Dorsolateral prefrontal cortex (tissue), 120 donors: ENCODE measurements at regions of chr10 and their contacts with region 1.

Region 1: DNA sequence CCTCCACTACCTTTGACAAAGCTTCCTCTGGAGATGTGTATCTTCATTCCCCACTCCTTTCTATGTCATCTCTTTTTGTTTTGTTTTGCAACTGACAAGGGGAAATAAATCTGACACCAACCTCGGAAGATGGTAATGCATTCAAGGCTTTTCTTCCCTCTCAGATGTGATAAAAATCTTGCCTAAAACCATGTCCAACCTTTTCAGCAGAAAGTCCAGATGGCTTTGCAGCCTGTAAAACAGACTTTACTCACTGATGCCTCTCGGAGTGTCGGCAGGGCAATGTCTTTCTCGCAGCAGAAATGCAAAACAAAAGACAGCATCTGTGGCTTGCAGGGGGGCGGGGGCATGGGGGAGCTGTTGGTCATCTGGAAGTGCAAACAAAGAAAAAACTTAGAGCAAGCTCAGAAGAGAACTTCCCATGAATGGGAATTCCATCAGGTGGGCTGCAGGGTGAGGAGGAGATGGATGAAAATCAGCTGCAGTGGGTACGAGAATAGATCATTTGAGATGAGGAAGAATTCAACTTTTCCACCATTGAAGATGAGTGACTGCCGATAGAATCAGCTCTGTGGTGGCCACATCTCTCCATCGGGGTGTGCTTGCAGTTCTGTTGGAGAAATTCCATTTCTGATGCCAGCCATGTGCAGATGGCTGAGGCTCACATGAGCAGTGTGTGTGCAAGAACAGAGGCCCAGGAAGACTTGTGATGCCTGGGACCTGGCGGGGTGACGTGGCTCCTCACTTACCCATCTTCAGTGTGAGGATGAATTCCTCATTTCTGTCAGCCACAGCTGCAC is 237.7 kb downstream of the WDR37 start:
- DNase-seq: peak in 2 of 10 donors; percentile 53 to 68
- H3K4me3 ChIP-seq: peak overlapping the region in 50 of 59 donors; percentile 0 to 54 (median 33)
- H3K27ac ChIP-seq: peak overlapping the region in 56 of 59 donors; percentile 0 to 93 (median 79)
- H3K27me3 ChIP-seq: peaks cover 0 to 20% (median 0%) of the 10 kb centered on the region in 45 donors
- CTCF ChIP-seq: peak in 4 of 56 donors; percentile 5 to 36 (median 22)

Region 2: GRCh38 chr10:822661-823367 is 471.0 kb before region 1 on chr10:
- intact Hi-C with region 1: no loop called
- DNase-seq: no peak
- H3K4me3 ChIP-seq: no peak overlapping the region
- H3K27ac ChIP-seq: no peak overlapping the region
- H3K27me3 ChIP-seq: no peaks in the 10 kb centered on the region
- CTCF ChIP-seq: no peak

Region 3: DNA sequence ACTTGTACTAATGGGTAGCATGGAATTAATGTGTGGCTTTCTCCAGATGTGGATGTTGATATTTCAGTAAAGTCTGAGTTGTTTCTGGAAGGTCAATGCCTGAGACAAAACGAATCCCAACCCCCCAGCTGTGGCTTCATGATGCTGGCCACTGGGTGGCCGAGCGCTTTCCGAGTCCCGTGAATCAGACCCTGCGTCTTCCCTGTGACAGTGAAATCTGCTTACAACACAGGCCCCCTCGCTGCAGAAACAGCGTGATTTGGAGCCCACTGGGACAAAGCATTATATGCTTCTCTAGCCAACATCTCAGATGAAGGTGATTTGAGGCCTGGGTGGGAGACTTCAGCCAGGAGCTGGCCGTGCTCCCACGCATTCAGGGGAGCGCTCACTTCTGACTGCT is 113.0 kb before region 1 on chr10:
- intact Hi-C with region 1: loop called in 1 of 2 experiments (anchors 5 kb)
- DNase-seq: peak in 7 of 10 donors; percentile 47 to 66 (median 56)
- H3K4me3 ChIP-seq: no peak overlapping the region
- H3K27ac ChIP-seq: peak overlapping the region in 56 of 59 donors; percentile 10 to 100 (median 81)
- H3K27me3 ChIP-seq: no peaks in the 10 kb centered on the region
- CTCF ChIP-seq: peak in 49 of 56 donors; percentile 22 to 76 (median 50)

Region 4: DNA sequence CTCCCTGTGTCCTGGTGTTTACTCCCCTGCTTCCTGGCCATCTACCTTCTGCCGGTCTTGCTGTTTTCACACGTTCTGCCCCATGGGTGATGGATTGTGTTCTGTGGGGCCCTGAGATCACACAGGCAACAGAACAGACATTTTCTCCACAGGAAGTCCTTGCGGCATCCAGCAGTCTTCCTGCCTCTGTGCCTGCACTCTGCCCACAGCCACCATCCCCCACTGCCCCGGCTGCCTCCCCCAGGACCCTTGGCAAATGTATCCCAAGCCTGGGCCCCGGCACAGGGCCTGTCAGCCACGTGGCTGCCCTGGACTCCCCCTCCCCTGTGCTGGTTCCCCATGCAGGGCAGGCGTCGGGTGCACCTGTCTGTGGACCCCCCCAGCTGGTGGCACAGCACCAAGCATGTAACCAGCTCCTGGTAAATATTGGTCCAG is 53.5 kb before region 1 on chr10:
- intact Hi-C with region 1: loop called in 1 of 2 experiments (anchors 5 kb)
- DNase-seq: peak in 1 of 10 donors; percentile 44
- H3K4me3 ChIP-seq: peak overlapping the region in 43 of 59 donors; percentile 17 to 67 (median 40)
- H3K27ac ChIP-seq: peak overlapping the region in 56 of 59 donors; percentile 5 to 96 (median 87)
- H3K27me3 ChIP-seq: peaks cover 0 to 23% (median 3%) of the 10 kb centered on the region in 45 donors
- CTCF ChIP-seq: no peak